Activated CD4-positive, alpha-beta memory T cell treated with anti-CD3 and anti-CD28 coated beads for 36 hours (primary cell): ENCODE measurements at regions of chr22 and their contacts with region 1.

Region 1: DNA sequence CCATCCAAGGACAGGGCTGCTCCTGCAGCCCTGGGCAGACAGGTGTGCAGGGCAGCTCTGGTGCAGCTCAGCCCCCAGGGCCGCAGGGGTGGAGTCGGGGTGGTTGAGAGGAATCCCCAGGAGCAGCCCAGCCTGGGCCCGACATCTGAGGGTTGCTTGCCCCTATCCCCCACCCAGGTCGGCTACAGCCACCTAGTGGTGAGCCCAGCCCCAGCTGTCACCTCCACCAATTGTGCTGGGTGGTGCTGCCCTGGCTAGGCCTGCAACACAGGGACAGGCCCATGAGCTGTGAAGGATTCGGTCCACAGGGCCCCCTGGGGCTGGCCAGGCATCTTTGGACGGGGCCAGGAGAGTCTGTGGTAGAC is 29.6 kb downstream of the RTN4R start:
- DNase-seq: peak; percentile 76
- H3K4me3 Mint-ChIP-seq: no peak overlapping the region
- H3K27ac Mint-ChIP-seq: peak overlapping the region; percentile 65
- H3K4me1 Mint-ChIP-seq: peaks cover 20% of the 10 kb centered on the region
- H3K27me3 Mint-ChIP-seq: no peaks in the 10 kb centered on the region

Region 2: GRCh38 chr22:20156611-20157429 is 81.7 kb before region 1 on chr22:
- CTCF ChIA-PET with region 1: interaction called, 10 read pairs
- POLR2A ChIA-PET with region 1: no interaction called
- intact Hi-C with region 1: no loop called
- DNase-seq: peak; percentile 90
- H3K4me3 Mint-ChIP-seq: no peak overlapping the region
- H3K27ac Mint-ChIP-seq: no peak overlapping the region
- H3K4me1 Mint-ChIP-seq: no peaks in the 10 kb centered on the region
- H3K27me3 Mint-ChIP-seq: peaks cover 3% of the 10 kb centered on the region

Region 3: DNA sequence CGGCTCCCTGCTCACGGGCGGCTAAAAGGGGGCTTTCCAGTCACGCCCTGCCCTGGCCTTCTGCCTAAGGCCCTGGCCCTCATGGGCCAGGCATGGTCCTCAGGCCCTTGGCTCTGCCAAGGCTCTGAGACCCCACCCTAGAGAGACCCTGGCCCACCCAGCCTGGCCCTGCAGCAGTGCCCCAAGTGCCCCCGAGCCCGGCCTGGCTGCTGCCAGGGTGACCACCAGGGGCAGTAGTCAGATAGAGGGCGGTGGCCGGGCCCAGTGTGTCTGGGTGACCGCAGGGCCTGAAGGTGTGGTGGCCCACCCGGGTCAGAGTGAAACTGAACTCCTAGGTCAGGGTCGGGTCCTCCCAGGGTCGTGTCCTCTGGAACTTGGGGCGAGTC is 58.3 kb before region 1 on chr22:
- CTCF ChIA-PET with region 1: no interaction called
- POLR2A ChIA-PET with region 1: no interaction called
- intact Hi-C with region 1: no loop called
- DNase-seq: no peak
- H3K4me3 Mint-ChIP-seq: no peak overlapping the region
- H3K27ac Mint-ChIP-seq: no peak overlapping the region
- H3K4me1 Mint-ChIP-seq: no peaks in the 10 kb centered on the region
- H3K27me3 Mint-ChIP-seq: peaks cover 3% of the 10 kb centered on the region

Region 4: DNA sequence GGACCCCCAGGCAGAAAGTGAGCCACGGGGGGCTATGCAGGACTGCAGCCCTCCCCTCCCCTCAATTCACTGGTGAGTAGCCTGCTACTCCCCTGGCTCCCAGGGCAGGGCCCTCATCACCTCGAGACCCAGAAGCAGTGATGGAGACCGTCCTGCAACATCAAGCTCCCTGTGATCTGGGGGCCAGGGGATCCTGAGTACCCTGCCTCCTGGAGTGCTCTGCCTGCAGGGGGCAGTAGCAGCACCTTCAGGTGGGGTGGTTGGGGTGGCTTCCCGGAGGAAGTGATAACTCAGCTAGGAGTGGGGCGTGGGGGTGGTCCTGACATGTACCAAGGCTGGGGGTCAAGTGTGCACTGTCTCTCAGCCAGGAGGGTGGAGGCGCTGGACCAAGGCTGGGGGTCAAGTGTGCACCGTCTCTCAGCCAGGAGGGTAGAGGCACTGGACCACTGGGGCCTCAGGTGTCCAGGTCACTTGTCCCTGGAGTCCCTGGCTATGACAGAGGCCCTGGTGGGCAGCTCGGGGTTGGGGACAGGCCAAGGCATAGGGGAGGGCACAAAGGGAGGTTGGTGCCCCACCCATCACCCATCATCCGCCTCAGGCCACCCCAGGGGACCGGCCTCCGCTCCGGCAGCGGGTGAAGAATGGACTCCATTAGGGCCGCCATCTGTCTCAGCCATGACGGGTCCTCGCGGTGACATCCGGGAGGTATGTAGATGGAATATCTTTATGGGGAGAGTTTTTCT is 20.2 kb after region 1 on chr22:
- CTCF ChIA-PET with region 1: interaction called, 11 read pairs
- POLR2A ChIA-PET with region 1: no interaction called
- intact Hi-C with region 1: no loop called
- DNase-seq: peak; percentile 45
- H3K4me3 Mint-ChIP-seq: no peak overlapping the region
- H3K27ac Mint-ChIP-seq: no peak overlapping the region
- H3K4me1 Mint-ChIP-seq: peaks cover 5% of the 10 kb centered on the region
- H3K27me3 Mint-ChIP-seq: no peaks in the 10 kb centered on the region